ENCODE measurements at regions of chr4 and their contacts with region 1.

Region 1: GRCh38 chr4:53196882-53197771 is 168.7 kb downstream of the SCFD2 start:
- DNase-seq: peak; percentile 44
- CTCF ChIP-seq: peak; percentile 65

Region 2: DNA sequence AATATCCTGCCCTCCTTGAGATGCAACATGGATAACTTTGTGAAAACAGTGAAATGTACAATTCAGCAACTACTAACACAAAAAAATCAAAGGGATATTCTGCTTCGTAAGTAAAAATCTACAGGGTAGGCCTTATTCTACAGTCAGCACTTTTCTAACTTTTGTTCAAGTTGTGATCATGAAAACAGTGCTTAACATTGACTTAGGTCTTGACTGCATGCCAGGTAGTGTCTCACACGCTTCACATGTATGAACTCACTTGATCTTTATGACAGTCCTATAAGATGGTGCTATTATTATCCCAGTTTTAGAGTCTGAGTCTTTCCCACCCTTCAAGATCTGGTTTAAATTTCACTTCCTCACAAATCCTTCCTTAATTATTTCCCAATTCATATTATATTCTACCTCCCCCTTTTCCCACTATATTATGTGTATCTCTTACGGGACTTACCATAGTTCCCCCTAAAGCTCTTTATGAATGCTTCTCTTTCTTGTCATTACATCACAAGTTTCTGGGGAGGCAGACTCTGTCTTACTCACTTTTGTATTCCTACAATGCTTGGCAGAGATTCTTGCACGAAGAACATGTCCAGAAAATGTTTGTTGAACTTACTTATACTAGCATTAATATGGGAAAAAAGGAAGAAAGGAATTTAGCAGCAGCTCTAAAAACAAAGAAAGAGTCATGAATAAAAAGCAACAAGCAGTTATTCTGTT is 11.1 kb before region 1 on chr4:
- CTCF ChIA-PET with region 1: interaction called, 11 read pairs
- POLR2A ChIA-PET with region 1: no interaction called
- DNase-seq: no peak
- CTCF ChIP-seq: no peak

Region 3: GRCh38 chr4:53804719-53805118 is 607.6 kb after region 1 on chr4:
- CTCF ChIA-PET with region 1: interaction called, 11 read pairs
- POLR2A ChIA-PET with region 1: no interaction called
- DNase-seq: peak; percentile 40
- CTCF ChIP-seq: peak; percentile 67

Measured in GM10248 (cell line).